HepG2 (cell line): ENCODE measurements at regions of chr18 and their contacts with region 1.

Region 1: DNA sequence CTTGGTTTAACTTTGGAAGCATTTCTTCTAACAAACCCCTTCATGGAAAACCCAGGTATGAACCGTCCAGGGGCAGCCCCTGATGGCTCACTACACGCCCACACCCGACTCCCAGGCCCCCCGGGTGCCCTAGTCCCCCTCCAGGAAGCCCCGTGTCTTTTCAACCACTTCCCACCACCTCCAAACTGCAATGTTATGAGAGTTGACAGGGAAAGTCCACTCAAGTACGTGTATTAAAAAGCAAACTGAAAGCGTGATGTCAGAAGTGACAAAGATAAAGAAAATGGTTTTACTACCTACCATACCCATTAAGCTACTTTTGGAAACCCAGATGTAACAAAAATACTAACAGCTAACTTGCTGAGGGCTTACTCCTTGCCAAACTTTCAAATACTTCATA is 51.5 kb downstream of the L3MBTL4 start:
- DNase-seq: no peak
- ATAC-seq: no peak
- H3K4me3 ChIP-seq: no peak overlapping the region
- H3K27ac ChIP-seq: no peak overlapping the region
- H3K4me1 ChIP-seq: peaks cover 52% of the 10 kb centered on the region
- H3K27me3 ChIP-seq: no peaks in the 10 kb centered on the region
- CTCF ChIP-seq: no peak
- EP300 ChIP-seq: no peak
- POLR2A ChIP-seq: no peak
- RAD21 ChIP-seq: no peak

Region 2: DNA sequence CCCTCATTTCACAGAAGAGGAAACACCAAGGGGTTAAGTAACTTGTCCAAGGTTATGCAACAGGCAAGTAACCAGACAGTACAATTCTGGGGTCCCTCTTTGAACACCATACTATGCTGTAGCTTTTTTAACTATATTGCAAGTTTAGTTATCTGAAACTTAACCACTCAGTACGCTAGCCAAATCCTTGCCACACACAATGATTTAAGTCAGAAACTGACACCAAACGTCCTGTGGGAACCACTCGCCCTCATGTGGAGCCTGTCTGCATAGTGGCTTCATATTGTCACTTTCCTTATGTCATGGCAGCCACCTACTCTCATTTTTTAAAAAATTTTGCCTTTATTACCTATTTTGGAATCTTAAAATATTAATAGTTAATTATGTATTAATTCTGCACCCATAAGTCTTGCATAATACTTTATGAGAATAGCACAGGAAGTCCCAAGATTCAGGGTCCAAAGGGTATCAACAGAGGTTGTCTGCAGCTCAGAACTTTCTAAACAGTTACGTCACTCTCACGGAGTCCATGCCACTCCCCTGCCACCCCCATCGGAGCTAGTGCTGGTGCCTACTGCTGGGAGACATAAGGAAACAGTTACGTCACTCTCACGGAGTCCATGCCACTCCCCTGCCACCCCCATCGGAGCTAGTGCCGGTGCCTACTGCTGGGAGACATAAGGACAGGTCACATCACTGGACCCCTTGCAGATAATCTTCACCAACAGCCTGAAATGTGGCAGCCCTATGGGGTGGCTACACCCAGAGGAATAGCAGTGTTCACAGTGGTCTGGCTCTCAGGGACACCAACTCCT is 47.5 kb before region 1 on chr18:
- CTCF ChIA-PET with region 1: no interaction called
- POLR2A ChIA-PET with region 1: no interaction called
- in situ Hi-C with region 1: loop called (anchors 10 kb)
- intact Hi-C with region 1: no loop called
- DNase-seq: peak; percentile 56
- ATAC-seq: peak; percentile 87
- H3K4me3 ChIP-seq: peak overlapping the region in 1 of 3 experiments; percentile 48; a peak in 2 of 6 replicates
- H3K27ac ChIP-seq: peak overlapping the region; percentile 34
- H3K4me1 ChIP-seq: peaks cover 20% of the 10 kb centered on the region
- H3K27me3 ChIP-seq: no peaks in the 10 kb centered on the region
- CTCF ChIP-seq: no peak
- EP300 ChIP-seq: peak in 1 of 2 experiments; percentile 5; a peak in 1 of 4 replicates
- POLR2A ChIP-seq: no peak
- RAD21 ChIP-seq: no peak